Activated CD4-positive, alpha-beta T cell treated with anti-CD3 and anti-CD28 coated beads for 36 hours (primary cell): ENCODE measurements at regions of chr2 and their contacts with region 1.

Region 1: DNA sequence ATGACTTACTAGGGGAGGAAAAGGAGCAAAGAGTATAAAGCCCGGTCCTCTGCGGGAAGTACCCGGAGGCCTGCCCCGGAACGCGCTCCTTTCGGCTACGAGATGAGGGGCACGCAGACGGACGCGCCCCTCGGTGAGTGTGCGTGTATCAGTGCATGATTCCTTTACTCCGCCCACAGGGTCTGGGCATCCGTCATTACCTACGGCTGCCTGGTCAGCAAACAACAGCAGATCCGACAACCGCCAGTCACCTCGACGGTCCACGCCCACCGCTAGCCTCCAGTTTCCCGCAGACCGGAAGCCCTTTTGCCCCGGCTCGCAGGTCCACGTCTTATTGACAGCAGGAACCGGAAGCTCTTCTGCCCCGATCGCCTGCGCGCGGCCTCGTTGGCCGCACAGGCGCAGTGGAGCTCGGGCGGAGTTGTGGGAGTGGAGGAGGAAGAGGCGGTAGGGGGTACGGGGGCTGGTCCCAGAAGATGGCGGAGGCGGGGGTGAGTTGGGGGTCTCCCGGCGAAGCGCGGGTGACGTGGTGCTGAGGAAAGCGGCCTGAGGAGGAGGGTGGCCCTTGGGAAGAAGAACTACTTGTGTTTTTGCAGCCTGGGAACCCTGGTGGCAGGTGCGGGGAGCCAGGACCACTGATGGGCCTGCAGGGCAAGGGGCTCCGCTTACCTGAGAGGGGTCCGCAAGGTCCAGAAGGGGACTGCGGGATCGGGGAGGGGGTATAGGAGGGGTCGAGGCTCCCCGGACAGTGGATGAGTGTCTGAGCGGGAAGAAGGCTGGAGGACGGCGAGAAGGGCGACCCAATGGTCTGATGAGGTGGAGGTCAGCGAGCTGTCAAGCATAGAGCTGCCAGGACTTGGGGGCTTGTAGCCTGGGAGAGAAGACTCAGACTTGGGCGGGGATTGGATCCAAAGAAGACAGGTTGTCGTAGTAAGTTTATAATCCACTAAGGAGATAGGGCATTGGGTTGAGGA is at the start of gene INSIG2:
- DNase-seq: peak; percentile 97
- ATAC-seq: peak; percentile 89
- H3K4me3 Mint-ChIP-seq: peak within 1 kb of the TSS; percentile 88
- H3K27ac Mint-ChIP-seq: peak within 1 kb of the TSS; percentile 88
- H3K4me1 Mint-ChIP-seq: peaks cover 19% of the 10 kb centered on the region
- H3K27me3 Mint-ChIP-seq: peaks cover 8% of the 10 kb centered on the region
- total RNA-seq, gene INSIG2: 23.5 to 56.4 TPM

Region 2: GRCh38 chr2:117814417-117815264 is 273.7 kb before region 1 on chr2 and contains the start of gene DDX18:
- CTCF ChIA-PET with region 1: no interaction called
- POLR2A ChIA-PET with region 1: no interaction called
- intact Hi-C with region 1: loop called (anchors 1 to 2 kb)
- DNase-seq: peak; percentile 98
- ATAC-seq: peak; percentile 91
- H3K4me3 Mint-ChIP-seq: peak within 1 kb of the TSS; percentile 96
- H3K27ac Mint-ChIP-seq: peak within 1 kb of the TSS; percentile 99
- H3K4me1 Mint-ChIP-seq: peaks cover 41% of the 10 kb centered on the region
- H3K27me3 Mint-ChIP-seq: no peaks in the 10 kb centered on the region
- total RNA-seq, gene DDX18: 161 to 180 TPM

Region 3: GRCh38 chr2:117856415-117857210 is 231.7 kb before region 1 on chr2:
- CTCF ChIA-PET with region 1: no interaction called
- POLR2A ChIA-PET with region 1: no interaction called
- intact Hi-C with region 1: no loop called
- DNase-seq: no peak
- ATAC-seq: no peak
- H3K4me3 Mint-ChIP-seq: no peak overlapping the region
- H3K27ac Mint-ChIP-seq: no peak overlapping the region
- H3K4me1 Mint-ChIP-seq: no peaks in the 10 kb centered on the region
- H3K27me3 Mint-ChIP-seq: peaks cover 37% of the 10 kb centered on the region

Region 4: GRCh38 chr2:118046634-118047210 is 41.6 kb before region 1 on chr2:
- CTCF ChIA-PET with region 1: interaction called, 4 read pairs
- POLR2A ChIA-PET with region 1: no interaction called
- intact Hi-C with region 1: loop called in 1 of 2 experiments (anchors 2 kb)
- DNase-seq: no peak
- ATAC-seq: no peak
- H3K4me3 Mint-ChIP-seq: no peak overlapping the region
- H3K27ac Mint-ChIP-seq: no peak overlapping the region
- H3K4me1 Mint-ChIP-seq: peaks cover 2% of the 10 kb centered on the region
- H3K27me3 Mint-ChIP-seq: peaks cover 46% of the 10 kb centered on the region

Region 5: DNA sequence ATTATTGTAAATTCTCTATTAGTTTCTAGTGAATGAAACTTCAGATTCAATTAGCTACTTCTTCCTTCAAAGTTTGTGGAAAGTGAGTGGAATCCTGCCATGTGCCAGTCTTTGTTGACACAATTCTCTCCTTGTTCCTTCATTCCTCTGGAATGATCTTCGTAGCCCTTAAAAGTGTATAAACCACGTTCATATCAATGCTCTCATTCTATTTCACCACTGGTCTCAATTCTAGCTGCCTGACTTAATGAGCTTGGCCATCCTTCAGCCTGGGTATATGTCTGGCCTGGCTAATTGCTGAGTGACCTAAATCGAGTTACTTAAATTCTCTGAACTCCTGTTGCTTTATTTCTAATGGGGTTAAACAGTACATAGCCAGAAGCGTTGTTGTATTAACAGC is 43.4 kb after region 1 on chr2:
- CTCF ChIA-PET with region 1: no interaction called
- POLR2A ChIA-PET with region 1: no interaction called
- intact Hi-C with region 1: loop called in 1 of 2 experiments (anchors 1 kb)
- DNase-seq: no peak
- ATAC-seq: no peak
- H3K4me3 Mint-ChIP-seq: no peak overlapping the region
- H3K27ac Mint-ChIP-seq: no peak overlapping the region
- H3K4me1 Mint-ChIP-seq: peaks cover 12% of the 10 kb centered on the region
- H3K27me3 Mint-ChIP-seq: peaks cover 8% of the 10 kb centered on the region

Region 6: DNA sequence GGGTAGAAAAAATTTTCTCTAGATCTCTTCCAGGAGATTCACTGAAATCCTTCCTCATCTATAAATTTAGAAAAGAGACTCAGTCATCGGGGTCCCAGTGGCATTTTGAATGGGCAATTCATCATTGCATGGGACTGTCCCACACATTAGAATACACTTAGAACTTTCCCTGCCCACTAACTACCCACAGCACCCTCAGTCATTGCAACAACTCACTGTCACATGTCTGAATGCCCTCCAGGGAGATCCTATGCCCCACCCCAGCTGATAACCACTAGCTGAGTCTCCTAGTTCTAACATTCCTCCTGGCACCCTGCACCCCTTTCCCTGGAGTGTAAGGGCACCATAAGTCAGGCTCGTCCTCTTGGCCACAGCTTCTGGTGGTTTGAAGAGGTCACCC is 89.5 kb after region 1 on chr2:
- CTCF ChIA-PET with region 1: interaction called, 4 read pairs
- POLR2A ChIA-PET with region 1: interaction called, 5 read pairs
- intact Hi-C with region 1: loop called in 1 of 2 experiments (anchors 2 kb)
- DNase-seq: peak; percentile 30
- ATAC-seq: peak; percentile 40
- H3K4me3 Mint-ChIP-seq: no peak overlapping the region
- H3K27ac Mint-ChIP-seq: no peak overlapping the region
- H3K4me1 Mint-ChIP-seq: peaks cover 16% of the 10 kb centered on the region
- H3K27me3 Mint-ChIP-seq: peaks cover 8% of the 10 kb centered on the region

Region 7: GRCh38 chr2:118197011-118197675 is 108.8 kb after region 1 on chr2:
- CTCF ChIA-PET with region 1: no interaction called
- POLR2A ChIA-PET with region 1: no interaction called
- intact Hi-C with region 1: no loop called
- DNase-seq: no peak
- ATAC-seq: peak; percentile 58
- H3K4me3 Mint-ChIP-seq: no peak overlapping the region
- H3K27ac Mint-ChIP-seq: no peak overlapping the region
- H3K4me1 Mint-ChIP-seq: no peaks in the 10 kb centered on the region
- H3K27me3 Mint-ChIP-seq: peaks cover 2% of the 10 kb centered on the region

Region 8: DNA sequence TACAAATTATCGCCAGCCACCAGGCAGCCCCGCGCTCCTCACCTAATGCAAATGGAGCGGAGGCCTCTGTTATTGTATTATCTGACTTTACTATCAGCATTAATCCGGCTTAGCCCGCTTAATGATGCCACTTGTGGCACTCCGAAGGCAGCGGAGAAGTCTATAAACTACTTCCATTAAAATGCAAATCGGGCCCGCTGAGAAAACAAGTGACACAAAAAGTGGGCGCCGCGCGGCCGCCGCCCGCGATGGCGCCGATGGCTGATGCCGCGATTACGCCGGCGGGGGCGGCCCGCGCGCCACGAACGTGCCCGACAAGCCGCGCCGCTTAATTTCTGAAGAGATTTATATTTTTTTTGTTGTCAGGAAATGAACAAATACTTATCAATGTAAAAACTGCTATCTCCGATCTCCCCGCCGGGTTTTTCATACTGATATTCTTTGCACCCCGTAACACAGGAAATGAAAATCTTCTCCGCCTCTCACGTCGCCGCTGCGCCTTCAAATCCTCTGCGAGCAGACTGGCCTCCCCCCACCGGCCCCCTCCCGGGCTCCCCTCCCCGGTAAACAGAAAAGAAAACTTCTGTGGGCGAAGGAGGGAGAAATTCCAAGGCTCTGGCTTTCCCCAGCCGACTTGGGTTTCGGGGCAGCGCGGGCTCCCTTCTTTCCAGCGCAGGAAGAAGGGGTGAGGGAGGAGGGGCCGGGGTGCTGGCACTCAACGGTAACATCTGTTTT is 221.8 kb after region 1 on chr2:
- CTCF ChIA-PET with region 1: no interaction called
- POLR2A ChIA-PET with region 1: interaction called, 4 read pairs
- intact Hi-C with region 1: loop called in 1 of 2 experiments (anchors 2 kb)
- DNase-seq: peak; percentile 83
- ATAC-seq: peak; percentile 86
- H3K4me3 Mint-ChIP-seq: peak overlapping the region; percentile 76
- H3K27ac Mint-ChIP-seq: peak overlapping the region; percentile 93
- H3K4me1 Mint-ChIP-seq: peaks cover 7% of the 10 kb centered on the region
- H3K27me3 Mint-ChIP-seq: no peaks in the 10 kb centered on the region